SK-N-SH (cell line): ENCODE measurements at regions of chr19 and their contacts with region 1.

Region 1: GRCh38 chr19:18457483-18458331 is 19.8 kb upstream of the ISYNA1 start:
- DNase-seq: no peak
- H3K4me3 ChIP-seq: no peak overlapping the region
- H3K27ac ChIP-seq: no peak overlapping the region
- H3K4me1 ChIP-seq: peaks cover 9 to 15% of the 10 kb centered on the region in 2 experiments; a peak in 3 of 4 replicates
- H3K27me3 ChIP-seq: no peaks in the 10 kb centered on the region
- CTCF ChIP-seq: no peak
- EP300 ChIP-seq: no peak
- RAD21 ChIP-seq: no peak

Region 2: DNA sequence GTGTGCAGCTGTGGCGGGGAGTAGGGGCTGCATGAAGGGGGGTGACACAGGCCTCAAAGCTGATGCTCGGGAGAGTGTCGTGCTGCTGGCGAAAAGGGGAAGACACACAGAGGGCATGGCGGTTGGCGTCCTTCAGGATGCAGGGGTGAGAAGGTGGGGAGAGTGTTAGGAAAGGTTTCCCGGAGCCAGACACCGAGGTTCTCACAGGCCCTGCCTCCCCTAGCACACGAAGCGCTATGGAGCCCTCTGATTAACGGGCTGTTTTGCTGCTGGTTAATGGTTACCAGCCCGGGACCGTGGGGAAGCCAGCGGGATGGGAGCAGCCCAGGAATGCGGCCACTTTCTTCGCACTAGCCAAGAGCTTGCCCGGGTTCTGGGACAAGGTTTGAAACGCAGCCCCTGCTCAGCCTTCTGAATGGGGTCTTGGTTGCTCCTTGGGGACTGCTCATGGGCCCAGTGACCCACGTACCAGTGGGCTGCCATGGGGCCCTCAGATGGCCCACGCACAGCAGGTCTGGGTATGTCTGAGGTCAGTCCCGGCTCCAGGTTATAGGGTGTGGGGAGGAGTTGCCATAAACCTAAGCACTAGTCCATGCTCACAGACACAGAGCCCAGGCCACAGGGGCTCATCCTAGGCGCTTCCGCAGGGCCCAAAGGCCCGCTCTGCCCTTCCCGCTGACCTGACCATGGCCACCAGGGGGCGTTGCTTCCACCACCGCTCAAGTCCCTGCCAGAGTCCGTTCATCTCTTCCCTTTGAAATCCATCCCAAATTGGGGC is 11.6 kb after region 1 on chr19:
- CTCF ChIA-PET with region 1: interaction called, 215 read pairs
- POLR2A ChIA-PET with region 1: no interaction called
- DNase-seq: peak; percentile 82
- H3K4me3 ChIP-seq: no peak overlapping the region; a peak in 1 of 4 replicates
- H3K27ac ChIP-seq: no peak overlapping the region
- H3K4me1 ChIP-seq: peaks cover 0 to 5% of the 10 kb centered on the region in 2 experiments; a peak in 1 of 4 replicates
- H3K27me3 ChIP-seq: no peaks in the 10 kb centered on the region
- CTCF ChIP-seq: peak; percentile 84
- EP300 ChIP-seq: no peak
- RAD21 ChIP-seq: peak; percentile 59

Region 3: DNA sequence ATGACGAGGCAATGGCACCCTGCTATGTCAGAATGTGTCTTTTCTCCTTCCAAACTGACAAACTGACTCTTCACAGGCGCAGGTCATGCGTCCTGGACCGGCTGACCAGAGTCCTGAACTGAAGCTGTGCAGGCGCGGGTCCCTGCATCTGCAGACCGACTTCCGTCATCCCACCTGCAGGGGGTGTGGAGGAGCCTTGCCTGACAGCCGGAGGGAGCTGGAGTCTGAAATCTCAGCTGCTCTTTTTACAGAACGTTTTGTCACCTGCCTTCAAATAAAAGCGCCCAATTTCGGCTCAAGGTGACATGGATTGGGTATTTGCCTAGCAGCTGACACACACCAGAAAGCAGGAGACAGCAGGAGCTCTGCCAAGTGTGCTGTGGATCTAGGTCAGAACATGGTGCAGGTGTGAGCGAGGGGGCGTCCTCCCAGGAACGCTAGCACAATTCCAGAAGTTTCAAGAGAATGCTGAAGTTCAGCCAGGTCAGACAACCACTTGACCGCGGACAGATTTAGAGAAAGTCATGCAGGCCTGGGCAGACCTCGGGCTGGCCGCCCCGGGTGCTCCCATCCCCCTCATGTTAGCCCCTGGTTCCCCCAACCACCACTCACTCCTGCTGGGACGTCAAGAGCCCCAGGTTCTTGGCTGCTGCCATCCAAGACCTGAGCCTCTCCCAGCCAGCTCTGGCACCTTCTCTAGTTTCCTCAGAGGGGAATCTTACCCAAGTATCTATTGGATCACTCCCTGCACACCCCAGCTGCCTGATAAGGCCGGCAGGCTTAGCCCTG is 31.3 kb after region 1 on chr19:
- CTCF ChIA-PET with region 1: interaction called, 12 read pairs
- POLR2A ChIA-PET with region 1: interaction called, 4 read pairs
- DNase-seq: peak; percentile 78
- H3K4me3 ChIP-seq: no peak overlapping the region
- H3K27ac ChIP-seq: no peak overlapping the region
- H3K4me1 ChIP-seq: peaks cover 14 to 51% of the 10 kb centered on the region in 2 experiments; a peak in 2 of 4 replicates
- H3K27me3 ChIP-seq: no peaks in the 10 kb centered on the region
- CTCF ChIP-seq: peak; percentile 26
- EP300 ChIP-seq: no peak
- RAD21 ChIP-seq: peak; percentile 65

Region 4: GRCh38 chr19:18514800-18515651 is 57.3 kb after region 1 on chr19:
- CTCF ChIA-PET with region 1: interaction called, 29 read pairs
- POLR2A ChIA-PET with region 1: no interaction called
- DNase-seq: no peak
- H3K4me3 ChIP-seq: no peak overlapping the region
- H3K27ac ChIP-seq: no peak overlapping the region; a peak in 1 of 4 replicates
- H3K4me1 ChIP-seq: peaks cover 4 to 7% of the 10 kb centered on the region in 2 experiments; a peak in 1 of 4 replicates
- H3K27me3 ChIP-seq: no peaks in the 10 kb centered on the region
- CTCF ChIP-seq: no peak
- EP300 ChIP-seq: no peak
- RAD21 ChIP-seq: no peak